GM10248 (cell line): ENCODE measurements at regions of chr1 and their contacts with region 1.

Region 1: DNA sequence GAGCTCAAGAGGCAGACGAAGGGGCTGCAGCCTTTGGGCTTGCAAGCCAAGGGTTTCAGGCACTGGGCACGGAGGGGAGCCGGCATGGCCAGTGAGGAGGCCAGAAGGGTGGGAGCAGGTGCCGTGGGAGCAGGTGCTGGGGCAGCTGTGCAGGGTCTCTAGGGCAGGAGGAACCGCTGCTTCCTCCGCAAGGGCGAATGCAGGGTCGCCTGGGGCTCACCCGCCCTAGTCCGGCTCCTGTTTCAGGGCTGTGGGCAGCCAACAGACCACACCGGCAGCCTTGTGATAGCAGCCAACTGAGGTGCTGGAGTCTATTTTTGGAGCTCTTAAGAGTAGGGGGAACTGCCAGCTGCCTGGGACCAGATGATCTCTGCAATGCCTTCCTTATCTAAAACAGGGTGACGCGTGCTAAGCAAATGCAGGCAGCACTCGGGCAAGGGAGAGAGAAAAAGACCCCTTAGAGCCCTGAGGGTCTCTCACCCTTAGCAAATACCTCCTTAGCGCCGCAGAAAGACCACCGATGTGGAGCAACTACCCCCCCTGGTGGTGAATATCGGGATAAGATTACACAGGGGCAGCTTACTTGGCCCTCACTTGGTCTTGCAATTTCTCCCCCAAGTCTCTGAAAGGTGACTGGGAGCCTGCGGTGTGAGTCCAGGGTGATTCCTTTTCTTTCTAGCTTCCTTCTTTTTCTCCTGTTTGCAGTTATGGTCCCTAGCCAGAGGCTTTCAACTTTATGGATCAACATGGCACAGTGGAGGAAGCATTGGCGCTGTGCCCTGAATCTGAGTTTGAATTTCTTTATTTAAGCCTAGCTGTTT is 20.7 kb upstream of the MAPKAPK2 start:
- DNase-seq: peak; percentile 78
- CTCF ChIP-seq: peak; percentile 66

Region 2: GRCh38 chr1:206489980-206490770 is 173.9 kb before region 1 on chr1:
- CTCF ChIA-PET with region 1: interaction called, 35 read pairs
- POLR2A ChIA-PET with region 1: no interaction called
- DNase-seq: peak; percentile 83
- CTCF ChIP-seq: peak; percentile 88

Region 3: DNA sequence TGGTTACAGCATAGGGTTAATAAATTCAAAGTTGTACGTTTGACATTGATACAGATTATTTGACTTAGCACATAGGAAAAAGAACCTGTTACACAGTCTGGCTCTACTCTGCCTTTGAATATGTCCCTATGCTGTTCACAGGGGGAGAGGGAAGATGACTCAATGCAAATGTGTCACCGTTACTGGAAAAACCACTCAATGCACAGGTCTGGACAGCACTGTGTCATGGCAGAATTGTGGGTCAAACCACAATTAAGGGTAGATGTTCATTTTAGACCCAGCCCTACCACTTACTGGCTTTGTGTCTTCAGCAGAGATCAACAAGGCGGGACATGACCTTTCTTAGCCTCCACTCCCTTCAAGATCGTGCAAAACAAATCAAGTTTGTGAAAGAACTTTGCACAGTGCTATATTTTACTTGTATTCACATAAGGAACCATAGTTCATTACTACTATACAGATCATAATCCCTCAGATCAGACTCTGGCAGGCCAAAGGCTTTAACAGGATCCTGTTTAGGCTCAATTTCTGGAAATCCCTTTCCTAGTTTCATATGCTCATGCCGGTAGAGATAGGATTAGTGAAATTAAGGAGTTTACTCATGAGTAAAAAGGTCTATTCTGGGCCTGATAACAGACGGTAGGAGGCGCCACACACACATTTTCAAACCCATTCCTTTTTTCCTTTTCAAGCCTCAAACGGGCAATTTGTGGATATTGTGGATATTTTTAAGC is 73.8 kb before region 1 on chr1:
- CTCF ChIA-PET with region 1: interaction called, 21 read pairs
- POLR2A ChIA-PET with region 1: no interaction called
- DNase-seq: peak; percentile 54
- CTCF ChIP-seq: peak; percentile 41

Region 4: DNA sequence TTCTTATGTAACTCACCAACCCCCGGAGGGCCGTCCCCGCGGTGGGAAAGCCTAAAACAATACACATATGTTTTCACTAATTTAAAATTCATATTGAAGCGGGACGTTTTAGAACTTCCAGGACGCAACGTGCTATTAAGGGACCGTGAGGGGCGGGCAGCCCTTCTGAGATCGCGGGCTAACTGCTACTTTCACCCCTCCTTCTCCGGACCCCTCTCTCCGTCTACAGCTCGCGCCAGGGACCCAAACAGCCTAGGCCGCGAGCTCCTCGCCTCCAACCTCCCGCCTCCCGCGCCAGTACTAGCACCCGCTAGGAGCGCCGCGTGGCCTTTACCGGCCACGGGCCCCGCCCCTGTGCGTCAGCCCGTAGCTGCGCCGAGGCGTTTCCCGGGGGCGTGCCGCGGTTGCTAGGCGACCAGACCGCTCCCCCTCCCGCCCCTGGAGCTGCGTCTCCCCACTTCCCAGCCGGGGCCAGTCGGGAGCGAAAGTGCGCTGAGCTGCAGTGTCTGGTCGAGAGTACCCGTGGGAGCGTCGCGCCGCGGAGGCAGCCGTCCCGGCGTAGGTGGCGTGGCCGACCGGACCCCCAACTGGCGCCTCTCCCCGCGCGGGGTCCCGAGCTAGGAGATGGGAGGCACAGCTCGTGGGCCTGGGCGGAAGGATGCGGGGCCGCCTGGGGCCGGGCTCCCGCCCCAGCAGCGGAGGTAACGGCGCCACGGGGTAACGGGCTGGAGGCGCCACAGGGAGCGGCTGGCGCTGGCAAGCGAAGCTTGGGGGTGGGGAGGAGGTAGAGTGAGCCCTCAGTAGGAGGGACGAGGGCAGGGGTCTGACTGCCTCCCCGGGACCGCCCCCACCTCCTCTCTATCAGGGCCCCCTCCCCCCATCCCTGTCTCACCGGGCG is 28.7 kb before region 1 on chr1 and contains the start of gene DYRK3:
- CTCF ChIA-PET with region 1: interaction called, 314 read pairs
- POLR2A ChIA-PET with region 1: interaction called, 5 read pairs
- DNase-seq: peak; percentile 97
- CTCF ChIP-seq: no peak

Region 5: DNA sequence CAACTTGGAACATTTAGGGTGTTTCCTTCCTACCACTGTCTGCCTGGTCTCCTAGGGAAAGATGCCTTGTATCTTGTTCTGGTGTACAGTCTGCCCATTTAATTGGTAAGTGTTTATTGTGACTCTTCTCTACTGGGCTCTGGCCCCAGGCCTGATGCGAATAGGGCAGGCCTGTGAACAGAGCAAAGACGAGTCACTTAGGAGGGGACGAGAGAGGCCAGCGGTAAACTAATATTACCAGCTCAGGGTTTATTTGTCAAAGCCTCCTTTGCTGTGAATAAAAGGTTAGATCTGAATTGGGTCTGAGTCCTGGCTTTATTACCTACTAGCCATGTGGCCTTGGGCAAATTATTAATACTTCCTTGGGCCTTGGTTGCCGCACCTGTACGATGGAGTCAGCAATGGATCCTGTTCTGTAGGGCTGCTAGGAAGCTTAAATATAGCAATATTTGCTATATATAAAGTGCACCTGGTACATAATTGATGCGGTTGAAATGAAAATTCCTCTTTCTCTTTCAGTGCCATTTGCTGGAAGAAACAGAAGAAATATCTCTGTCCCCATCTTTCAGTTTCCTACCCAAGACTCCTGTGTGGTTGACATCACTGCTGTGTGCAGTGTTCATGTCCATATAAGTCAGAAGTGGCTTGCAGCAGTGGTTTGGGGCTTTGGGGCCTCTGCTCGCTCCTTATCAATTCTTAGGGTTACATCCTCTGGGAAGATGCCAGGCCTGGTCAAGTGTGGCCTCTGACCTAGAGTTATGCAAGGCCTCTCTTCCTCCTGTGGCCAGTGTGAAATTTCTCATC is 53.0 kb after region 1 on chr1:
- CTCF ChIA-PET with region 1: interaction called, 22 read pairs
- POLR2A ChIA-PET with region 1: no interaction called
- DNase-seq: peak; percentile 51
- CTCF ChIP-seq: no peak

Region 6: DNA sequence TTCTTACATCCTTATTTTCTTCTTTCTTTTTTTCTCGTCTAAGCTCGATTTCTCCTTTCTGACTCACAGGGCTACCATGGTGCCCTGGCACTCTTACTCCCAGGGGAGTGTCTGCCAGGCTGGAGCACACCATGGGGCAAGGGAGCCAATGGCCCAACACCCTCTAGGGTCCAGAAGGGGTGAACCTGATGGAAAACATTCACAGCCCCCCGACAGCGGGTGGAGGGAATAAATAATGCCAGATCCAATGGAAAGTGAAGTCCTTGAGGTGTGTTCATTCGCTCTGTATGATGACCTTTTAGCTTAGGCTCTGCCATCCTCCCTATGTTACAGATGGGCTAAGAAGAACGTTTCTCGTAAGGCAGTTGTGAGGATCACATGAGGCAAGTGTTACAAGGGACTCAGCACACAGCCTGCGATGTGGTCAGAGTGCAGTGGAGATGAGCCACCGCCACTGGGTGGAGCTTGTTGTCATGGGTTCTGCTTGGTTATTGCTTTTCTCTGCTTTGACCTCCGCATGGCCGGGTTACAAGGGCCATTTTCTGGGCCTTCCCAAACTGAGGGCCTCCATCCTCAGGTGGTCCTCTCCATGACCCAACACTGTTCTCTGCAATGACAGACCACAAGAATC is 261.2 kb after region 1 on chr1:
- CTCF ChIA-PET with region 1: interaction called, 13 read pairs
- POLR2A ChIA-PET with region 1: no interaction called
- DNase-seq: peak; percentile 81
- CTCF ChIP-seq: peak; percentile 69

Region 7: GRCh38 chr1:207017615-207018559 is 353.8 kb after region 1 on chr1:
- CTCF ChIA-PET with region 1: no interaction called
- POLR2A ChIA-PET with region 1: no interaction called
- DNase-seq: no peak
- CTCF ChIP-seq: no peak